H1 (cell line): ENCODE measurements at regions of chr13 and their contacts with region 1.

Region 1: DNA sequence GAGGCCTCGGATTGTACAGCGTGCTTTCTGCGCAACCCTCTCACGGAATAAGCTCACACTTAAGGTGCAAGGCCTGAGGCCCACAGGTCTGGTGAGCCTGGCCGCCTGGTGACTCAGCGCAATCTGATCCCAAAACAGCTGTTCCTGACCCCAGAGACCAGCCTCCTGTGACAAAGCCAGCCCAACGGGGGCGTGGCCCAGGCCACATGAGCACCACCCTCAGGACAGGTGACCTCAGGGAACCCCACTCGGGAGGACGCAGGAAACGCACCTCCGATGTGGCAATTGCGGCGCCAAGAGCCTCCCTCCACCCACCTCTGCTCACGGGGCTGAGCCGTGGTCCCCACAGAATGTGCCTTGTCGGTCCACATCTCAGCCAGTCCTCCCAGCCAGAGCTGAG is 26.4 kb downstream of the GRTP1 start:
- DNase-seq: peak; percentile 19 to 72
- H3K4me3 ChIP-seq: no peak overlapping the region
- H3K27ac ChIP-seq: no peak overlapping the region
- H3K4me1 ChIP-seq: peaks cover 0 to 5% (median 0%) of the 10 kb centered on the region in 4 experiments; a peak in 1 of 7 replicates
- H3K27me3 ChIP-seq: no peaks in the 10 kb centered on the region
- CTCF ChIP-seq: no peak
- EP300 ChIP-seq: no peak
- POLR2A ChIP-seq: no peak
- RAD21 ChIP-seq: no peak

Region 2: GRCh38 chr13:113169277-113170272 is 168.0 kb before region 1 on chr13:
- CTCF ChIA-PET with region 1: no interaction called
- POLR2A ChIA-PET with region 1: no interaction called
- DNase-seq: no peak
- H3K4me3 ChIP-seq: no peak overlapping the region
- H3K27ac ChIP-seq: no peak overlapping the region
- H3K4me1 ChIP-seq: no peaks in the 10 kb centered on the region
- H3K27me3 ChIP-seq: no peaks in the 10 kb centered on the region
- CTCF ChIP-seq: no peak
- EP300 ChIP-seq: no peak
- POLR2A ChIP-seq: no peak
- RAD21 ChIP-seq: no peak

Region 3: GRCh38 chr13:113322043-113322461 is 15.5 kb before region 1 on chr13:
- CTCF ChIA-PET with region 1: interaction called, 4 read pairs
- POLR2A ChIA-PET with region 1: interaction called, 34 read pairs
- DNase-seq: no peak
- H3K4me3 ChIP-seq: no peak overlapping the region
- H3K27ac ChIP-seq: no peak overlapping the region; the same call in 1 of the 2 replicates
- H3K4me1 ChIP-seq: no peaks in the 10 kb centered on the region; a peak in 1 of 7 replicates
- H3K27me3 ChIP-seq: no peaks in the 10 kb centered on the region
- CTCF ChIP-seq: no peak
- EP300 ChIP-seq: no peak
- POLR2A ChIP-seq: no peak
- RAD21 ChIP-seq: no peak

Region 4: GRCh38 chr13:113357529-113357928 is 20.0 kb after region 1 on chr13:
- CTCF ChIA-PET with region 1: interaction called, 5 read pairs
- POLR2A ChIA-PET with region 1: interaction called, 11 read pairs
- DNase-seq: no peak
- H3K4me3 ChIP-seq: no peak overlapping the region
- H3K27ac ChIP-seq: no peak overlapping the region
- H3K4me1 ChIP-seq: peaks cover 0 to 5% (median under 1%) of the 10 kb centered on the region in 4 experiments; a peak in 3 of 7 replicates
- H3K27me3 ChIP-seq: no peaks in the 10 kb centered on the region
- CTCF ChIP-seq: no peak
- EP300 ChIP-seq: no peak
- POLR2A ChIP-seq: no peak
- RAD21 ChIP-seq: no peak